ENCODE measurements at regions of chr9 and their contacts with region 1.

Region 1: DNA sequence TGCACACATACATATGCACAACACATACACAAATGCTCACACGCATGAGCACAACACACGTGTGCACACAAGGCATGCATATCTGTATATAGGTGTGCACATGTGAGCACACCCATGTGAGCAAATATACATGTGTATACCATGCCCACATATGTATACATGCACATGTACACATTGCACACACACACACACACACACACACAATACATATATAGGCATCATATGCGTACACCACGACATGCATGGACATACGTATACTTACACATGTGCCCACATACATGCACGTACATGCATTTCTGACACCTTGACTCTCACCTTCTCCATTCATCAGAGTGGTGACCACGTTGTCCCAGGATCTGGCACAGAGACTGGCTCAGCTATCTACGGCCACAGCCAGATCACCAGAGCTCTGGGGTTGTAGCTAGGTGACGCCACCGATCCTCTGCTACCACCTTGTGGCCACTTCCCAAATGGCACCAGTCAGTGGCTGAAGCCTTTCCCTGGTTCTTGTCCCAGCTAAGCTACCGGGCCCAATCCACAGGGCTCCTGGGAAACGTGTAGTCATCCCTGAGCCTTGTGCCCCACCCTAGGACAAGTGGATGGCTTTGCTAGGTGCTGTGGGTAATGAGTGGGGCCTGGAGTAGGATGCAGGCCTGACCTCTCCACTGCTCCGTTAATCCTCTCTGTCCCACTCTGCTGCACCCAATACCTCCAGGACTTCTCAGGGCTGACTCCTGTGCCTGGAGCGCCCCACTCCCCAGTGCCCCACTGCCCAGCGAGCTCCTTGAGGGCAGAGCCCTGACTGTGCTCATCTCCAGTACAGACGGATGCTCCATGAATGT is 194.4 kb downstream of the RGS3 start:
- DNase-seq: peak; percentile 72 to 89
- H3K4me3 ChIP-seq: no peak overlapping the region
- H3K4me1 ChIP-seq: no peaks in the 10 kb centered on the region
- H3K27me3 ChIP-seq: peaks cover 14% of the 10 kb centered on the region

Region 2: DNA sequence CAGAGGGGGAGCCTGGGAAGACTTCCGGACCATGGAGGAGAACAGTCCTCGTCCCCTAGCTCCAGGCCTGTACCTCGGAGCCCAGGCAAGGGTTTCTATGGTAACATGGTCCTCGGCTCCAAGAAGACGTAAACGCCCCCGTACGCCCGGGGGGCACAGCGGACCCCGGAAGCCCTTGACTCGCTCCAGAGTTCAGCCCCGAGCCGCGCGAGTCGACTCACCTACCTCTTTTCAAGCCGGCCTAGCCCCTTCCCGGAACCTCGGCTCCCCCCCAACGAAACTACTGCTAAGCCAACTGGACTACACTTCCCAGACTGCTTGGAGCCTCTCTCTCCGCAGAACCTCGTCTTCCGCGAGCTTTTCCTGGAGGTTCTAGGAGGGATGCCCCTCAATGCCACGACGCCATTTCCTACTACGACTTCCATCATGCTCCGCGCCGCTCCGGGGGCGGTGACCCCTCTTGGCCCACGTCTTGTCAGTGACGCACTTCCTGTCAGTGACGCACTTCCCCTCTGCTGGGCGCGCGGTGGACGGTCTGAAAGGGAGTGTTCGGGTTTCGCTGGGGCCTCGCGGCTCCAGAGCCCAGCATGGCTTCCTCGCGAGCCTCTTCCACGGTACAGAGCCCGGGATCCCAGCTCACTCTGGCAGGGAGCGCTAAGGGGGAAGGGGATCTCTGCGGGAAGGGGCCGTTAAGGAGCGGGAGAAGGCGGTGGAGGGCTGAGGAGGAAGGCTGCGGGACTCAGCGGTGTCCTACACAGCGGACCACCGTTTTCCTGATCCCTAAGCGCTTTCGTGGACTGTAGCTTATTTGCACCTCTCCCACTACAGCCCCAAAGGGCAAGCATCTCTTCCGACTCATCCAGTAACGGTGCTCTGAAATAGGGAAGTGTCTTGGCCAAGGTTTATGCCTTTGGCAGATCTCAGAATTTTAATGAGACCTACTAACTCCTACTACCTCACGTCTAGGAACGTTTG is 382.5 kb before region 1 on chr9 and contains the starts of genes CDC26 and PRPF4:
- in situ Hi-C with region 1: loop called (anchors 5 kb)
- DNase-seq: peak; percentile 95 to 98
- H3K4me3 ChIP-seq: peak within 1 kb of the TSS; percentile 95
- H3K4me1 ChIP-seq: peaks cover 13% of the 10 kb centered on the region
- H3K27me3 ChIP-seq: no peaks in the 10 kb centered on the region

Region 3: GRCh38 chr9:113446323-113446740 is 211.6 kb before region 1 on chr9:
- in situ Hi-C with region 1: loop called (anchors 5 kb)
- DNase-seq: peak in 1 of 2 experiments; percentile 59
- H3K4me3 ChIP-seq: no peak overlapping the region
- H3K4me1 ChIP-seq: no peaks in the 10 kb centered on the region
- H3K27me3 ChIP-seq: no peaks in the 10 kb centered on the region

Region 4: GRCh38 chr9:113591001-113591898 is 66.7 kb before region 1 on chr9:
- in situ Hi-C with region 1: loop called (anchors 5 kb)
- DNase-seq: peak; percentile 79 to 87
- H3K4me3 ChIP-seq: no peak overlapping the region
- H3K4me1 ChIP-seq: peaks cover 11% of the 10 kb centered on the region
- H3K27me3 ChIP-seq: no peaks in the 10 kb centered on the region

Measured in HAP-1 (cell line).